ENCODE measurements at regions of chr16 and their contacts with region 1.

Region 1: DNA sequence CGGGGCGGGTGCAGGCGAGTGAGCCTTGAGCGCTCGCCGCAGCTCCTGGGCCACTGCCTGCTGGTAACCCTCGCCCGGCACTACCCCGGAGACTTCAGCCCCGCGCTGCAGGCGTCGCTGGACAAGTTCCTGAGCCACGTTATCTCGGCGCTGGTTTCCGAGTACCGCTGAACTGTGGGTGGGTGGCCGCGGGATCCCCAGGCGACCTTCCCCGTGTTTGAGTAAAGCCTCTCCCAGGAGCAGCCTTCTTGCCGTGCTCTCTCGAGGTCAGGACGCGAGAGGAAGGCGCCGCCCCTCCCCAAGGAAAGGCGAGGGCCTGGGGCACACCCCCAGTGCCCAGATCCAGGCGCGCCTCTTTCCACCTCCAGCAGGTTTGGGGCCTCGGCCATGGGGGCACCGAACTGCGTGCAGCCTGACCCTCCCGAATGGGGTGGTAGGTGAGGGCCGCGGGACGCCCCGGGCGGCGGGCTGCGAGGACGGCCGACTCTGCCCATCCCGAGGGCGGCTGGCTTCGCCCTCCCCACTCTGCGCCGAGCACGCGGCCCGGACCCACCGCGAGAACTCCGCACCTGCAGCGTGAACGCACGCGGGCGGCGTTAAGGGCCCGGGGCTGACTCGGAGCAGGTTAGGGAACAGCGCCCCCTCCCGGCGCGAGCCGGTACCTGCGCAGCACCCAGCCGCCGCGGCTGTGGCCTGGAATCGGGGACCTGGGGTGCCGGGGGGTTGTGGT is 844 bp downstream of the HBQ1 start:
- DNase-seq: peak; percentile 95
- CTCF ChIP-seq: peak; percentile 90

Region 2: GRCh38 chr16:117379-118365 is 63.4 kb before region 1 on chr16:
- in situ Hi-C with region 1: loop called (anchors 5 kb)
- DNase-seq: peak; percentile 74
- CTCF ChIP-seq: peak; percentile 34